T-cell (primary cell): ENCODE measurements at regions of chr4 and their contacts with region 1.

Region 1: GRCh38 chr4:55920571-55920970 is 28.2 kb upstream of the CEP135 start:
- DNase-seq: no peak
- ATAC-seq: no peak
- H3K4me3 ChIP-seq: no peak overlapping the region
- H3K4me3 Mint-ChIP-seq: no peak overlapping the region
- H3K27ac ChIP-seq: no peak overlapping the region
- H3K27ac Mint-ChIP-seq: no peak overlapping the region
- H3K4me1 ChIP-seq: no peaks in the 10 kb centered on the region
- H3K4me1 Mint-ChIP-seq: no peaks in the 10 kb centered on the region
- H3K27me3 ChIP-seq: no peaks in the 10 kb centered on the region
- H3K27me3 Mint-ChIP-seq: no peaks in the 10 kb centered on the region

Region 2: DNA sequence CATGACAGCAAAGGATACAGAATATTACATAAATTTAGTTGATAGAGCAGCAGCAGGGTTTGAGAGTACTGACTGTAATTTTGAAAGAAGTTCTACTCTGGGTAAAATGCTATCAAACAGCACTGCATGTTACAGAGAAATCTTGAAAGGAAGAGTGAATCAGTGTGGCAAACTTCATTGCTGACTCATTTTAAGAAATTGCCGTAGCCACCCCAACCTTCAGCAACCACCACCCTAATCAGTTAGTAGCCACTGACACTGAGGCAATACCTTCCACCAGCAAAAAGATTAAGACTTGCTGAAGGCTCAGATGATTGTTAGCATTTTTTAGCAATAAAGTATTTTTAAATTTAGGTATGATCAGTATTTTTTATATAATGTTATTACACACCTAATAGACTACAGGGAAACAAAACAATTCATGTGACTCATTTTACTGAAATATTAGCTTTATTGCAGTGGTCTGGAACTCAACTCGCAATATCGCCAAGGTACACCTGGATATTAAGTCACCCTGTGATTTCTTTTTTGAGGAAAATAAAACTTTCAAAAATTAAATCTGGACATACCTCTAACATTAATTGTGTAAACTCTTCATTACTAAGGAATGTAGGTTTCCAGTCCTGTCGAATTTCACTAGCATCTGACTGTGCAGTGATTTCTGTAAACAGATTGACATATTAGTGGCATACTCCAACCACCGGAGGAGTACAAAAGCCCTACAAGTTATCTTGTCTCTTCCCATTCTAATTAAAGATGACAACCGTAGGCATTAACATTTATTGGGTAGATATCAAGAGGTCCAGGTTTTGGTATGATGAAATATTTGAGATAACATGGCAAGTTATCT is 445.0 kb before region 1 on chr4:
- CTCF ChIA-PET with region 1: no interaction called
- POLR2A ChIA-PET with region 1: no interaction called
- DNase-seq: no peak
- ATAC-seq: no peak
- H3K4me3 ChIP-seq: no peak overlapping the region
- H3K4me3 Mint-ChIP-seq: no peak overlapping the region
- H3K27ac ChIP-seq: no peak overlapping the region
- H3K27ac Mint-ChIP-seq: no peak overlapping the region
- H3K4me1 ChIP-seq: no peaks in the 10 kb centered on the region
- H3K4me1 Mint-ChIP-seq: no peaks in the 10 kb centered on the region
- H3K27me3 ChIP-seq: no peaks in the 10 kb centered on the region
- H3K27me3 Mint-ChIP-seq: no peaks in the 10 kb centered on the region

Region 3: DNA sequence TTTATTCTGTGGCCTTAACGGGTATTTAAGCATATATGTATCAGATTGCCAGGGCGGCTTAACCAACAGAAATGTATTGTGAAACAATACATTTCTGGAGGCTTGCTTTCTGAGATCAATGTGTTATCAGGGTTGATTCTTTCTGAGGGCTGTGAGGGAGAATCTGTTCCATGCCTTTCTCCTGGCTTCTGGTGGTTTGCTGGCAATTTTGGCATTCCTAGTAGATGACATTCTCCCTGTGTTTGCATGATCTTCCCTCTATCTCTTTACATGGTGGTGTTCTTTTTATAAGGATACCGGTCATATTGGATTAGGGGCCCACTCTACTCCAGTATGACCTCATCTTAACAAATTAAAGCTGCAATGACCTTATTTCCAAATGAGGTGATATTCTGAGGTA is 11.3 kb after region 1 on chr4:
- CTCF ChIA-PET with region 1: no interaction called
- POLR2A ChIA-PET with region 1: interaction called in 1 of 2 experiments, 11 read pairs
- DNase-seq: no peak
- ATAC-seq: no peak
- H3K4me3 ChIP-seq: no peak overlapping the region
- H3K4me3 Mint-ChIP-seq: no peak overlapping the region
- H3K27ac ChIP-seq: no peak overlapping the region
- H3K27ac Mint-ChIP-seq: no peak overlapping the region
- H3K4me1 ChIP-seq: no peaks in the 10 kb centered on the region
- H3K4me1 Mint-ChIP-seq: peaks cover 0 to 6% (median 2%) of the 10 kb centered on the region in 3 donors
- H3K27me3 ChIP-seq: peaks cover 0 to 4% of the 10 kb centered on the region in 2 experiments
- H3K27me3 Mint-ChIP-seq: no peaks in the 10 kb centered on the region